Breast epithelium (tissue), 4 donors: ENCODE measurements at regions of chr9 and their contacts with region 1.

Region 1: DNA sequence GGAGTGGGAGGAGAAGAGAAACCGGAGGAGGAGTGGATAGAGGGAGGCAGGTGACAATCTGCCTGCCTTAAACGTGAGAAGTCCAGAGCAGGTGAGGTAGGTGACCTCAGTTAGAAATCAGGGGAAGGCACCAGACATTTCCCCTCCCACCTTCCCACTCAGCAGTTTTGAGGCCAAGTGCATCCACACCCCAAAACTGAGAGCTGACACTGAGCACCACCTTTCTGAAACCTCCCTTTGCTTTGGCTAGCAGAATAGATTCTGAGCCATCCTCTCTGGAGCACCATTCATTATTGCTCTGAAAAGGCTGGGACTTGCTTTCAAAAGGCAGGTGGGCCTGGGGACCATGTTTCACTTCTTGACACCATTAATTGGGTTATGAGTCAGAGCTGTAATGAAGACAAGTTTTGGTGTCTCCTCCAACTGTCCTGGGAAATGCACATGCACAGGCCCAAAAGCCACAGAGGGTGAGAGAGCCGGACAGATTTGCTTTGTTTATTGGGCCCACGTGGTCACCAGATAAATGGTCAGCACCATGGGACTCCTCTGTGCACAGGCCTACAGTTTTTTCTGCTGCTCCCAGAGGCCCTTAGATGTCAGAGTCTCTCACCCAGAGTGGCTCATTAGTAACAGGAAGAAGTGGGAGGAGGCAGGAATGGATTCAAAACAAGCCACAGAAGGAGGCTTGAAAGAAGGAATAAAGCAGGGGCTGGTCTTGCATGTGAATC is 314.7 kb downstream of the TLE1 start:
- DNase-seq: no peak
- H3K4me3 ChIP-seq: no peak overlapping the region
- H3K27ac ChIP-seq: no peak overlapping the region
- H3K4me1 ChIP-seq: no peaks in the 10 kb centered on the region
- H3K27me3 ChIP-seq: no peaks in the 10 kb centered on the region
- CTCF ChIP-seq: no peak
- POLR2A ChIP-seq: no peak

Region 2: GRCh38 chr9:80538976-80539375 is 835.6 kb before region 1 on chr9:
- intact Hi-C with region 1: no loop called
- DNase-seq: no peak
- H3K4me3 ChIP-seq: no peak overlapping the region
- H3K27ac ChIP-seq: no peak overlapping the region
- H3K4me1 ChIP-seq: no peaks in the 10 kb centered on the region
- H3K27me3 ChIP-seq: no peaks in the 10 kb centered on the region
- CTCF ChIP-seq: no peak
- POLR2A ChIP-seq: no peak

Region 3: GRCh38 chr9:82209797-82210470 is 835.3 kb after region 1 on chr9:
- intact Hi-C with region 1: loop called (anchors 5 kb)
- DNase-seq: no peak
- H3K4me3 ChIP-seq: no peak overlapping the region
- H3K27ac ChIP-seq: no peak overlapping the region
- H3K4me1 ChIP-seq: no peaks in the 10 kb centered on the region
- H3K27me3 ChIP-seq: no peaks in the 10 kb centered on the region
- CTCF ChIP-seq: no peak
- POLR2A ChIP-seq: no peak